ENCODE measurements at regions of chr11 and their contacts with region 1.

Region 1: GRCh38 chr11:120801801-120802689 is 221.9 kb upstream of the TBCEL start:
- DNase-seq: no peak
- H3K4me3 ChIP-seq: no peak overlapping the region
- H3K27ac ChIP-seq: no peak overlapping the region
- H3K4me1 ChIP-seq: peaks cover 0 to 5% (median 0%) of the 10 kb centered on the region in 6 donors
- H3K27me3 ChIP-seq: peaks cover 0 to 51% (median 3%) of the 10 kb centered on the region in 7 donors
- CTCF ChIP-seq: peak; percentile 48 to 90 (median 83)
- POLR2A ChIP-seq: no peak

Region 2: GRCh38 chr11:120511116-120511819 is 290.8 kb before region 1 on chr11 and contains the start of gene GRIK4:
- intact Hi-C with region 1: loop called (anchors 10 kb)
- DNase-seq: peak; percentile 94
- H3K4me3 ChIP-seq: peak within 1 kb of the TSS in 7 of 8 donors; percentile 20 to 68 (median 34)
- H3K27ac ChIP-seq: no peak within 1 kb of the TSS
- H3K4me1 ChIP-seq: peaks cover 0 to 12% (median 4%) of the 10 kb centered on the region in 6 donors
- H3K27me3 ChIP-seq: peaks cover 0 to 95% (median 24%) of the 10 kb centered on the region in 7 donors
- CTCF ChIP-seq: peak; percentile 83 to 94 (median 91)
- POLR2A ChIP-seq: no peak
- total RNA-seq, gene GRIK4: 0.40 to 2.4 (median 1.7) TPM

Region 3: DNA sequence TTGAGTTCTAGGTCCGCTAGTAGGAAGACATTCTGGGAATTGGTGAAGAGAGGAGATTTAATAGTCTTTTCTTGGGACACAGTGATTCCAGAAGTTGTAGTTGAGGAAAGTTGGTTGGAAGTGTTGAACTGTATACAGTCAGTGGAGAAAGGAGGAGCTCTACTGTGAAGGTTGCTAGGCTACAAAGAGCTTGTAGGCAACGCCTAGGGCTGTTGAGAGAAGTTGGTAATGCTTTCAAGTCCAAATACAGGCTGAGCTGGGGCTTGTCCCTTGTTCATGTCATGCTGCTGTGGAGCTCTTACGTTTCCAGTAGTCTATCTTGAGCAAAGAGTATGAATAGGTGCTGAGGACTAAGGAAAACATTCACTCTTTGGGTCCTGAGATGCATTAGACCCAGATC is 222.9 kb after region 1 on chr11:
- intact Hi-C with region 1: no loop called
- DNase-seq: no peak
- H3K4me3 ChIP-seq: peak overlapping the region in 6 of 8 donors; percentile 73 to 97 (median 75)
- H3K27ac ChIP-seq: peak overlapping the region in 1 of 8 donors; percentile 59
- H3K4me1 ChIP-seq: peaks cover 11 to 45% (median 19%) of the 10 kb centered on the region in 6 donors
- H3K27me3 ChIP-seq: peaks cover 0 to 5% (median 0%) of the 10 kb centered on the region in 7 donors
- CTCF ChIP-seq: no peak
- POLR2A ChIP-seq: no peak

Measured in spleen (tissue), 13 donors.